ENCODE measurements at regions of chr1 and their contacts with region 1.

Region 1: GRCh38 chr1:19582302-19582701 is 61.8 kb upstream of the NBL1 start:
- DNase-seq: peak; percentile 59
- H3K4me3 Mint-ChIP-seq: no peak overlapping the region
- H3K27ac Mint-ChIP-seq: no peak overlapping the region
- H3K4me1 Mint-ChIP-seq: no peaks in the 10 kb centered on the region
- H3K27me3 Mint-ChIP-seq: peaks cover 14% of the 10 kb centered on the region
- CTCF ChIP-seq: no peak

Region 2: GRCh38 chr1:19390901-19391595 is 191.3 kb before region 1 on chr1:
- CTCF ChIA-PET with region 1: no interaction called
- intact Hi-C with region 1: loop called (anchors 10 kb)
- DNase-seq: peak; percentile 11
- H3K4me3 Mint-ChIP-seq: no peak overlapping the region
- H3K27ac Mint-ChIP-seq: no peak overlapping the region
- H3K4me1 Mint-ChIP-seq: peaks cover 18% of the 10 kb centered on the region
- H3K27me3 Mint-ChIP-seq: no peaks in the 10 kb centered on the region
- CTCF ChIP-seq: peak; percentile 60

Measured in Calu3 (cell line).